ENCODE measurements at regions of chr21 and their contacts with region 1.

Region 1: GRCh38 chr21:42009831-42010523 is at the start of gene ZBTB21:
- DNase-seq: peak; percentile 96 to 99 (median 98)
- ATAC-seq: peak; percentile 87
- H3K4me3 ChIP-seq: peak within 1 kb of the TSS; percentile 78
- H3K4me3 Mint-ChIP-seq: peak within 1 kb of the TSS; percentile 93 to 99 (median 96)
- H3K27ac ChIP-seq: peak within 1 kb of the TSS; percentile 92
- H3K27ac Mint-ChIP-seq: peak within 1 kb of the TSS; percentile 99 to 100 (median 99)
- H3K4me1 ChIP-seq: peaks cover 0 to 5% of the 10 kb centered on the region in 2 donors
- H3K4me1 Mint-ChIP-seq: peaks cover 7 to 48% (median 41%) of the 10 kb centered on the region in 7 donors
- H3K27me3 ChIP-seq: no peaks in the 10 kb centered on the region
- H3K27me3 Mint-ChIP-seq: peaks cover 0 to 24% (median 0%) of the 10 kb centered on the region in 5 donors
- total RNA-seq, gene ZBTB21: 16.8 to 137 (median 25.2) TPM

Region 2: DNA sequence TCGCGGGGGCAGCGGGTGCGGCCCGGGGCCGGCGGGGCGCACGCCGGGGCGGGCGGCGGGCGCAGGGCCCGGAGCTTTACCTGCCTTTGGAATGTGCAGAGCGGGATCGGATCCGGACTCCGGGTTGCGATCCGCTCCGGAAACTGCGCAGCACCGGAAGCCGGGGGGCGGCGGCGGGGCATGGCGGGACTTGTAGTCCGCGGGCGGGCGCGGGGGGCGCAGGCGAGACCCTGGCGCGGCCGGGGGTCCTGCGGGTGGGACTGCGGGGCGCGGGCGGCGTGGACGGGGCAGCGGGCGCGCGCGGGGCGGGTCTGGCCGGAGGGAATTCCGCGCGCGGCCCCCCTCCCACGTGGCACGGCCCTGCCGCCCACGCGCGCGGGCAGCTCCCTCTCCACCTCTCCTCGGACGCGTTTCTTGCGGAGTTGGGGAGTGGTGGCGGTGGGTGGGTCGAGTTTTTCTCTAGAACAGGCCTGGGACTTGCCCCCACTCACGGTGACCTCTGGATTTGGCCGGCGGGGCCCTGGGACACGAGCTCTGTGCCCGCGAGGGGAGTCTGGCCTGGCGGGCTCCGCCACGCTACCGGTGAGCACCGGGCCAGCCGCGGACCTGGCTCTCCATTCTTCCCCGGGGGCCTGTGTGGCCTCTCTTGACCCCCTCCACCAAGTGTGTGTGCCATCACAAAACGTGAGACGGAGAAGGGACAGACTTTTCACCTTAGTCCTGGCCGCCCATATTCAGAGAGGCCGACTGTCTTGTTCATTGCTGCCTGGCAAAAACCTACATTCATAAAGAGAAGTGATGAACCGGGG is 130.6 kb before region 1 on chr21 and contains the start of gene PRDM15:
- CTCF ChIA-PET with region 1: no interaction called
- POLR2A ChIA-PET with region 1: no interaction called
- intact Hi-C with region 1: loop called (anchors 1 to 2 kb)
- DNase-seq: peak; percentile 69 to 88 (median 77)
- ATAC-seq: peak; percentile 85
- H3K4me3 ChIP-seq: peak within 1 kb of the TSS; percentile 84
- H3K4me3 Mint-ChIP-seq: peak within 1 kb of the TSS; percentile 88 to 95 (median 92)
- H3K27ac ChIP-seq: peak within 1 kb of the TSS; percentile 85
- H3K27ac Mint-ChIP-seq: peak within 1 kb of the TSS; percentile 92 to 97 (median 95)
- H3K4me1 ChIP-seq: peaks cover 9 to 16% of the 10 kb centered on the region in 2 donors
- H3K4me1 Mint-ChIP-seq: peaks cover 20 to 35% (median 29%) of the 10 kb centered on the region in 7 donors
- H3K27me3 ChIP-seq: no peaks in the 10 kb centered on the region
- H3K27me3 Mint-ChIP-seq: no peaks in the 10 kb centered on the region
- total RNA-seq, gene PRDM15: 10.0 to 20.1 (median 15.9) TPM

Region 3: DNA sequence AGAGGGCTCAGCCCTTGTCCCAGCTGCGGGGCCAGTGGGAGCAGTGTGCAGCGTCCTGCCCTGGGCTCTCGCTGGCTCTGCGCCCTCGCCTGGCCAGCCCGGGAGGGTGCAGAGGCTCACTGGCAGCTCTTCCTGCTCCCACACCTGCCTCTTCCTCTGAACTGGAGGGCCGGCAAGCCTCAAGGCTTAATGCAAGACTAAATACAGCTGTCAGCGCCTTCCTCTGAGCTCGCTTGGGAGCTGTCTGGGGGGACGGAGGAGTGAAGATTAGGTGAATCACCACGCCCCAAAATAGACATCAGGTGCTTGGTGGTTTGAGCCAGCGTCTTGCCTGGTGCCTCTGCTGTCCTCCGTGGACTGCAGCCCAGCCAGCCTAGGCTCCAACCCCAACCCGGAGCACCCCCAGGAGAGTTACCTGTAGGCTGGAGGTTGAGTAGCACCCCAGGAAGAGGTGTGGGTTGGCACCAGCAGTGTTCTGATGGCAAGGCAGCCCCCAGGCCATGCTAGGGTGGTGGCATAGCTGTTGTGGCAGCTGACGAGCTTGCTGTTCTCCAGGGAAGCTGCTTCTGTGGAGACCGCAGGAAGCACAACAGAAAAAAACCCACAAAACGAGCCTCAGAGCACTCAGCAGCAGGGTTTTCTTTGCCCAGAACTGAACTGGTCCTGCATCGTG is 98.0 kb after region 1 on chr21:
- CTCF ChIA-PET with region 1: interaction called, 60 read pairs
- POLR2A ChIA-PET with region 1: interaction called, 9 read pairs
- intact Hi-C with region 1: loop called (anchors 1 to 5 kb)
- DNase-seq: peak; percentile 46 to 82 (median 69)
- ATAC-seq: peak; percentile 97
- H3K4me3 ChIP-seq: peak overlapping the region; percentile 11
- H3K4me3 Mint-ChIP-seq: peak overlapping the region; percentile 34 to 84 (median 76)
- H3K27ac ChIP-seq: peak overlapping the region; percentile 38
- H3K27ac Mint-ChIP-seq: peak overlapping the region in 8 of 9 donors; percentile 11 to 82 (median 73)
- H3K4me1 ChIP-seq: peaks cover 0 to 15% of the 10 kb centered on the region in 2 donors
- H3K4me1 Mint-ChIP-seq: peaks cover 0 to 28% (median 10%) of the 10 kb centered on the region in 7 donors
- H3K27me3 ChIP-seq: no peaks in the 10 kb centered on the region
- H3K27me3 Mint-ChIP-seq: peaks cover 0 to 4% (median 0%) of the 10 kb centered on the region in 5 donors

Region 4: DNA sequence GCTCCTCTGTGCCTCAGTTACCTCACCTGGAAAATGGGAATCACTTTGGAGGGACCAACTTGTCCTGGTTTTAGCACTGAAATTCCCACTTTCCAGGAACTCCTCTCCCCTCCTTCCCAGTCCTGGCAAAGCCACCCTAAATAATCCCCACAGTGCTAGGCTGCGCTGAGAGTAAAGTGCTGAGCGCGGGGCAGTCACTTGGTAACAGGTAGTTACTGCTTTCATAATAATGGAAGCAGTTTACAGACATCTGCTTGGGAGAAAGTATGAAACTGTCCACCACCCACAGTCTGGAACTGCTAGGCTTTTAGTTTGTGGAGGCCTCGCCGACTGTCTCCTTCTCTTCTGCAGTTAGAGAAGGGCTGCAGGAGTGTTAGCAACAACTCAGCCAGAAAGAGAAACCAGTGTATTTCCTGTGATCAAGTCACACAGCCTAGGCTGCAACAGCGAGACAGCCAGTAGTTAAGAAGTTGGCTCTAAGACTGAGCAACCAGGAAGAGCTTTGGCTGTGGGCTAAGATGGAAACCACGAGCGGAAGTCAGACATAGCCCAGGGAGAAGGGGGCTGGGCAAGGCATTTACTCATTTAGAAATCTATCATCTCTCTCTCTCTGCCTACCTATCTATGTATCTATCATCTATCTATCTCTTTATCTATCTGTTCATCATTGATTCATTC is 178.1 kb after region 1 on chr21:
- CTCF ChIA-PET with region 1: no interaction called
- POLR2A ChIA-PET with region 1: no interaction called
- intact Hi-C with region 1: loop called in 1 of 2 experiments (anchors 1 kb)
- DNase-seq: peak; percentile 39 to 90 (median 86)
- ATAC-seq: peak; percentile 96
- H3K4me3 ChIP-seq: peak overlapping the region; percentile 25
- H3K4me3 Mint-ChIP-seq: peak overlapping the region; percentile 39 to 90 (median 75)
- H3K27ac ChIP-seq: peak overlapping the region; percentile 85
- H3K27ac Mint-ChIP-seq: peak overlapping the region; percentile 91 to 98 (median 95)
- H3K4me1 ChIP-seq: peaks cover 73 to 90% of the 10 kb centered on the region in 2 donors
- H3K4me1 Mint-ChIP-seq: peaks cover 34 to 83% (median 65%) of the 10 kb centered on the region in 7 donors
- H3K27me3 ChIP-seq: no peaks in the 10 kb centered on the region
- H3K27me3 Mint-ChIP-seq: peaks cover 0 to 8% (median 0%) of the 10 kb centered on the region in 5 donors

Measured in naive thymus-derived CD4-positive, alpha-beta T cell (primary cell).